ENCODE measurements at regions of chr1 and their contacts with region 1.

Region 1: DNA sequence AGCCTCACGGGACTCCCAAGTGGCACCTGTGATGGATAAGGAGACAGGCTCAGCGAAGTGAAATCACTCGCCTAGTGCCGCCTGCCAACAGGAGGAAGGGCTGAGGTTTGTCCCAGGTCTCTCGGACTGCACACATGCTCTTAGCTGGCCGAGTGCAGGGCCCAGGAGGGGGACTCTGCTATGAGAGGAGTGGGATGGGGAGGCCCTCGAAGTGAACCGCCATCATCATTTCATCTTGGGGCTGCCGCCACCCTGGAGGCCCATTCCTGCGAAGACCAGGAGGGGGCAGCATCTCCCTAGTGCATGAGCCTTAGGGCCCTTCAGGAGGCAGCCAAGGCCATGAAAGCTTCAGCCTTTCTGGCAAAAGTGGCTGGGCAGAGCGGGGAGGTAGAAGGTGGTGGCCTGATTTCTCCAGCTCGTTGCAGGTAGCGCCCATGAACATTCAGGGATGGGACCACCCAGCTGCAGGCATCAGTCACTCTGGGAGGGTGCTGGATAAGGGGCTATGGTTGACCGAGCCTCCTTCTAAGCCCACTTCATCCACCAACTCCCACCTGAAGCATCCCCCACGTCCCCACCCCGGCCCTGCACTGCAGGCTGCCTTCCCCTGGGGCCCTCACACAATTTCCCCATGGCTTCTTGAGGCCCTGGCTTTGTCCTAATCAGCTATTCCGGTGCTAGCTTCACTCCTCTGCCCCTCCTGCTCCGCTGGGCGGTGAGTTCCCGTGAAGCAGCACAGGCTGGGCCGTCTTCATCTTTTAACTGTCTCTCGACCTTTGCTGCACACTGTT is 17.2 kb upstream of the RASSF5 start:
- DNase-seq: peak; percentile 87
- H3K4me3 ChIP-seq: peak overlapping the region in 1 of 2 experiments; percentile 31; a peak in 1 of 4 replicates
- H3K27ac ChIP-seq: peak overlapping the region in 1 of 2 experiments; percentile 11; a peak in 1 of 4 replicates
- H3K4me1 ChIP-seq: peaks cover 3 to 20% of the 10 kb centered on the region in 2 experiments; a peak in 2 of 4 replicates
- H3K27me3 ChIP-seq: no peaks in the 10 kb centered on the region
- CTCF ChIP-seq: peak; percentile 96
- EP300 ChIP-seq: no peak
- RAD21 ChIP-seq: peak; percentile 94

Region 2: GRCh38 chr1:206469933-206470691 is 20.1 kb before region 1 on chr1 and contains the start of gene IKBKE:
- CTCF ChIA-PET with region 1: interaction called, 14 read pairs
- POLR2A ChIA-PET with region 1: no interaction called
- DNase-seq: no peak
- H3K4me3 ChIP-seq: peak within 1 kb of the TSS; percentile 57 to 83
- H3K27ac ChIP-seq: peak within 1 kb of the TSS in 1 of 2 experiments; percentile 56; a peak in 2 of 4 replicates
- H3K4me1 ChIP-seq: peaks cover 13 to 25% of the 10 kb centered on the region in 2 experiments; a peak in 2 of 4 replicates
- H3K27me3 ChIP-seq: no peaks in the 10 kb centered on the region
- CTCF ChIP-seq: peak; percentile 36
- EP300 ChIP-seq: no peak
- RAD21 ChIP-seq: no peak
- polyA plus RNA-seq, gene IKBKE: 14.2 and 14.5 TPM in 2 replicates

Region 3: DNA sequence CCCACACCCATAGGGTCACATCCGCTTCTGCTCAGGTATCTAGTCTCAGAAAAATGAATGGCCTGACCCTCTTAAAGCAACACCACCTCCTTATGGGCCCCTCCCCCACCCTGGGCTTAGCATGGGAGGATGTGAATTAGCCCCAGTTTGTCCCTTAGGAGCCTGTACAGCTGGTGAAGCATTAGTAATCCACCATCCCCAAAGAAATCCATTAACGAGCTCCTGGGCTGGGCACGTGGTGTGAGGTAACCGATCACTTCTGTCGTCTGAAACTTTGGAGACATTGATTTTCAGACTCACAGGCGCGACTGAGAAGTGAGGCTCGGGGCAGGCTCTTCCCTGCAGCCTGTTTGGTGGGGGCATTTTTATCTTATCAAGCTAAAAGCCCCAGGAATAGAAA is 27.6 kb after region 1 on chr1:
- CTCF ChIA-PET with region 1: interaction called, 11 read pairs
- POLR2A ChIA-PET with region 1: no interaction called
- DNase-seq: no peak
- H3K4me3 ChIP-seq: no peak overlapping the region
- H3K27ac ChIP-seq: no peak overlapping the region
- H3K4me1 ChIP-seq: peaks cover 9 to 14% of the 10 kb centered on the region in 2 experiments; a peak in 2 of 4 replicates
- H3K27me3 ChIP-seq: no peaks in the 10 kb centered on the region
- CTCF ChIP-seq: no peak
- EP300 ChIP-seq: no peak
- RAD21 ChIP-seq: no peak

Region 4: GRCh38 chr1:206551986-206552326 is 61.8 kb after region 1 on chr1:
- CTCF ChIA-PET with region 1: interaction called, 21 read pairs
- POLR2A ChIA-PET with region 1: no interaction called
- DNase-seq: no peak
- H3K4me3 ChIP-seq: no peak overlapping the region
- H3K27ac ChIP-seq: no peak overlapping the region
- H3K4me1 ChIP-seq: peaks cover 0 to 4% of the 10 kb centered on the region in 2 experiments; a peak in 2 of 4 replicates
- H3K27me3 ChIP-seq: no peaks in the 10 kb centered on the region; the same call in 1 of the 2 replicates
- CTCF ChIP-seq: no peak
- EP300 ChIP-seq: no peak
- RAD21 ChIP-seq: no peak

Region 5: GRCh38 chr1:206583707-206584648 is 93.8 kb after region 1 on chr1:
- CTCF ChIA-PET with region 1: interaction called, 231 read pairs
- POLR2A ChIA-PET with region 1: interaction called, 4 read pairs
- DNase-seq: peak; percentile 84
- H3K4me3 ChIP-seq: peak overlapping the region in 1 of 2 experiments; percentile 17; a peak in 1 of 4 replicates
- H3K27ac ChIP-seq: no peak overlapping the region
- H3K4me1 ChIP-seq: peaks cover 8 to 9% of the 10 kb centered on the region in 2 experiments; a peak in 3 of 4 replicates
- H3K27me3 ChIP-seq: no peaks in the 10 kb centered on the region
- CTCF ChIP-seq: peak; percentile 93
- EP300 ChIP-seq: no peak
- RAD21 ChIP-seq: peak; percentile 85

Region 6: DNA sequence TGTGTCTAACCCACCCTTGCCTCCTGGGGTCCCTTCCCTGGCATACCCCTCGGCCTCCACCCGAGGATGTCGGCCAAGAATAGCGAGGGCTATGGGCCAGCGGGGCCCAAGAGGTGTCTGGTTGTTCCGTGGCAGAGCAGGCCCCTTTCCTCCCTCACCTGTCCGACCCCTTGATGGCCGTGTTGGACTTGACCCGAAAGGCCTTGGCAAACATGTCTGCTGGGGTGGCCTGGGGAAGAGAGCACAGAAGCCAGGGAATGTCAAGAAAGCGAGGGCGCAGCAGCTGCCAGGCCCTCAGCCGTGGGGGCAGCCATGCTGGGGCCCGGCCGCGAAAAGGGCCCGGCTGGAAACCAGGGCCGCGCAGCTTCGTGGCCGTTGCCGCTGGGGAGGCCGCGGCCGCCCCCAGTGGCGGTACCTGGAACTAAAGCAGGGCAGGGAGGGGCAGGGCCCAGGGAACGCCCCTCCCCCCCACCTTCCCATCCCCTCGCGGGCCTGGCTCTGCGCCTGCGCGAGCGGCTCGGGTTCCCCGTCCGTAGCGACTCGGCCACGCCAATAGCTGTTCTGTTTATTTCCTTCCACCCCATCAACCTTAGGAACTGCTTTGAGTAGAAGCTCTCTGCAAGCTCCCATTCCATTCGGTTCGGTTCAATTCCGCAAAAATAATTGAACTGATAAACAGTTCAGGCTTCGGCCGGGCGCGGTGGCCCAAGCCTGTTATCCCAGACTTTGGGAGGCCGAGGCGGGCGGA is 122.1 kb after region 1 on chr1 and contains the start of gene EIF2D:
- CTCF ChIA-PET with region 1: interaction called, 11 read pairs
- POLR2A ChIA-PET with region 1: no interaction called
- DNase-seq: peak; percentile 100
- H3K4me3 ChIP-seq: peak within 1 kb of the TSS; percentile 81 to 94
- H3K27ac ChIP-seq: peak within 1 kb of the TSS; percentile 83 to 90
- H3K4me1 ChIP-seq: peaks cover 0 to 8% of the 10 kb centered on the region in 2 experiments; a peak in 2 of 4 replicates
- H3K27me3 ChIP-seq: no peaks in the 10 kb centered on the region
- CTCF ChIP-seq: peak; percentile 77
- EP300 ChIP-seq: peak in 1 of 2 experiments; percentile 44; a peak in 1 of 4 replicates
- RAD21 ChIP-seq: no peak
- polyA plus RNA-seq, gene EIF2D: 59.5 and 83.2 TPM in 2 replicates

Region 7: GRCh38 chr1:206982216-206982615 is 492.0 kb after region 1 on chr1:
- CTCF ChIA-PET with region 1: interaction called, 16 read pairs
- POLR2A ChIA-PET with region 1: no interaction called
- DNase-seq: peak; percentile 58
- H3K4me3 ChIP-seq: no peak overlapping the region
- H3K27ac ChIP-seq: no peak overlapping the region
- H3K4me1 ChIP-seq: no peaks in the 10 kb centered on the region
- H3K27me3 ChIP-seq: peaks cover 46% of the 10 kb centered on the region; the same call in 1 of the 2 replicates
- CTCF ChIP-seq: peak; percentile 62
- EP300 ChIP-seq: no peak
- RAD21 ChIP-seq: peak; percentile 85

Measured in SK-N-SH (cell line).